AG04449 (cell line): ENCODE measurements at regions of chr3 and their contacts with region 1.

Region 1: DNA sequence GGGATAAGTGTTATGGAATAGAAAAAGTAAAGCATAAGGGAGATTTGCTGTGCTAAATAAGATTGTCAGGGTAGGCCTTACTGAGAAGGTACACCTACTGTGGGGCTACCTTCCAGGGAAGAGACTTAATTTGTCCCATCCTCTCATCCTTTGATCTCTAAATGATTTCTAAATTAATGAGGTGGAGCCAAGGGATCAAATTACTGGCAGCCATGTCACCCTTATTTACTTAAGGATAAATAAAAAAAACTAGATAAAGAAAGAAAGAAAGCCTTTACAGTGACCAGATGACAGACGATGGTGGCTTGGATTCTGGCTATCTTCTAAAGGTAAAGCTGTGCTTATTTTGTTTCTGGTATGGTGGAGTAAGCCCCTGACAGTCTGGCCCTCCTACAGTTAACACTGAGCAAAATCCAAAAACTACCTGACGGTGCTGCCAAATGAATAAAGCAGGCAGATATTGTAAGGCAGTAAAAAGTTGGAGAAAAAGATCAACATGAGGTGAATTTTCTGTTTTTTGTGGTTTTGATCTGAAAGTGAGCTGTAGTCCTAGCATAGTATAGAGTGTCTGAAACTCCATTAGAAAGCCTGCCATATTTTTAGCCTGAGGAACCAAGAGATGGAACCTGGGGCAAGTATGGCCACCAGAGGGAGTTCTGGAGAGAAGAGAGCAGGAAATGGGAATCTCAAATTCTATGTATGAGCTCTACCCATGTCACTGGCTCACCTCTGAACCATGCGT is 285.1 kb upstream of the MANF start:
- DNase-seq: peak; percentile 4
- H3K4me3 ChIP-seq: no peak overlapping the region
- CTCF ChIP-seq: peak; percentile 72

Region 2: DNA sequence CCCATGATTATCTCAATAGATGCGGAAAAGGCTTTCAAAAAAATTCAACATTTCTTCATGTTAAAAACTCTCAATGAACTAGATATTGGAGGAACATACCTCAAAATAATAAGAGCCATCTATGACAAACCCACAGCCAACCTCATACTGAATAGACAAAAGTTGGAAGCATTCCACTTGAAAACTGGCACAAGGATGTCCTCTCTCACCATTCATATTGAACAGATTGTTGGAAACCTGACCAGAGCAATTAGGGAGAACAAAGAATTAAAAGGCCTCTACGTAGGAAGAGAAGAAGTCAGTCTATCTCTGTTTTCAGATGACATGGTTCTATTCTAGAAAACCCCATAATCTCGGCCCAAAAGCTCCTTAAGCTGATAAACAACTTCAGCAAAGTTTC is 10.6 kb after region 1 on chr3:
- CTCF ChIA-PET with region 1: interaction called, 13 read pairs
- POLR2A ChIA-PET with region 1: no interaction called
- DNase-seq: no peak
- H3K4me3 ChIP-seq: no peak overlapping the region
- CTCF ChIP-seq: no peak

Region 3: GRCh38 chr3:51384726-51385473 is 284.9 kb after region 1 on chr3 and contains the start of gene MANF:
- CTCF ChIA-PET with region 1: interaction called, 284 read pairs
- POLR2A ChIA-PET with region 1: no interaction called
- DNase-seq: peak; percentile 87
- H3K4me3 ChIP-seq: peak within 1 kb of the TSS; percentile 96
- CTCF ChIP-seq: no peak